HepG2 (cell line): ENCODE measurements at regions of chr3 and their contacts with region 1.

Region 1: GRCh38 chr3:43690400-43691119 is at the start of gene ABHD5:
- DNase-seq: peak; percentile 81
- ATAC-seq: peak; percentile 95
- H3K4me3 ChIP-seq: peak within 1 kb of the TSS; percentile 75 to 87 (median 82)
- H3K27ac ChIP-seq: peak within 1 kb of the TSS; percentile 86
- H3K4me1 ChIP-seq: peaks cover 30% of the 10 kb centered on the region
- H3K27me3 ChIP-seq: no peaks in the 10 kb centered on the region
- CTCF ChIP-seq: peak; percentile 58
- EP300 ChIP-seq: 0 out of 4 replicates have a peak, but pooled peaks of 1 of the 2 experiments have one; percentile 14
- POLR2A ChIP-seq: peak; percentile 97 to 98
- RAD21 ChIP-seq: peak; percentile 81
- total RNA-seq, gene ABHD5: 13.3 and 16.8 TPM in 2 replicates

Region 2: DNA sequence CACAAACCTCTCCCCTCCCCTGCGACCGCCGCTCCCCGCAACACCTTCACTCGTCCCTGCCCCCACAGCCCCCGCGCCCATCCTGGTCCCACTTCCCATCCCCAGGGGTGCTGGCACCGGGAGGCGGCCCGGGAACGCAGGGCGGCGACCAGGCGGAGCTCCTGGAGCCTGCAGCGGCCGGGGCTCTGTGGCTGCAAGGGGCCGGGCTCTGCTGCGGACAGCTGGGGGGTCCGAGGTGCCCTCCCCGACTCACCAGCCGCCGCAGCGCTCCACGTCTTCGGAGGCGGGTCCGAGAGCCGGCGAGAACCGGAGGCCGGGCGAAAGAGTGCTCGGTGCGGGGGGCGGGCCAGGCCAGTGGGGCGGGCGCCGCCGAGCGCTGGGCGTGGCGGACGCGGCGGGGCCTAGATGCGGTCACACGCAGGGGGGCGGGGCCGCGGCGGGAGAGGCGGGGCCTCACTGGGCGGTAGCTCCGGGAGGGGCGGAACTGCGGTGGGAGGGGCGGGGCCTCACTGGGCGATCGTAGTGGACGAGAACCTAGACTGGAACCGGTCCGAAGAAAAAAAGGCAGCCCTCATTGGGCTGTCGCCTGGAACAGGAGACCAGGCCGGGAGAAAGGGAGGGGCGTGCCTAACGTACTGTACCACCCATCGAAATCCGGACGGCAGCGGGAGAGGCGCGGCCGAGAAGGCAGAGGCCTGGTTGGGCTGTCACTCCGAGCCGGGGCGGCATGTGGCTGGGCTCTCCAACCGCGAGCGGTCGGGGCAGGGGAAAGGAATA is 68.7 kb before region 1 on chr3 and contains the start of gene ANO10:
- CTCF ChIA-PET with region 1: no interaction called
- POLR2A ChIA-PET with region 1: no interaction called
- in situ Hi-C with region 1: no loop called
- intact Hi-C with region 1: loop called (anchors 2 kb)
- DNase-seq: peak; percentile 97
- ATAC-seq: peak; percentile 98
- H3K4me3 ChIP-seq: peak within 1 kb of the TSS; percentile 89 to 98 (median 92)
- H3K27ac ChIP-seq: peak within 1 kb of the TSS; percentile 46
- H3K4me1 ChIP-seq: peaks cover 35% of the 10 kb centered on the region
- H3K27me3 ChIP-seq: no peaks in the 10 kb centered on the region; a peak in 1 of 5 replicates
- CTCF ChIP-seq: no peak
- EP300 ChIP-seq: no peak
- POLR2A ChIP-seq: peak; percentile 40 to 78; a peak in 2 of 4 replicates
- RAD21 ChIP-seq: no peak
- total RNA-seq, gene ANO10: 7.6 and 13.1 TPM in 2 replicates

Region 3: DNA sequence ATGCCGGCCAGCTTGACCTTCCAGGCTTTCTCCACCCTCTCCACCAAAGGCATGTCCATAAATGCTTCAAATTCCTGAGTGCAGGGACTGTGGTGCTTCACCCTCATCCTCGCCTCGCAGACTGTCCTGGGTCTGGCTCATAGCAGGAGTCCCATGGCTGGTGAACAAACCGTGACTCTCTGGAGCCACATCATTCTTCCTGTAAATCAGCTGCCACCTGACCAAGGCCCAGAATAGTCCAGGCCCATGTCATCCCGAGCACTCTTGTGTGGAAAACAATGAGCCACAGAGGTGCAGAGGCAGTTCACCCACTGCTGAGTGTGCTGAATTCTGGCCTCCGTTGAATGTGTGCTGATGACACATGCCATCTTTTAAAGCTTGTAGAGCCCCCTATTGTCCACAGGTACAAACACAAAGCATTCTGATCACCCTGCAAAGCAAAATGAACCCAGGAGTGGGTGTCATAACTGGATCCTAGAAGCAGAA is 68.8 kb after region 1 on chr3:
- CTCF ChIA-PET with region 1: interaction called, 3 read pairs
- POLR2A ChIA-PET with region 1: no interaction called
- in situ Hi-C with region 1: no loop called
- intact Hi-C with region 1: loop called (anchors 1 kb)
- DNase-seq: peak; percentile 56
- ATAC-seq: peak; percentile 92
- H3K4me3 ChIP-seq: peak overlapping the region in 1 of 3 experiments; percentile 35; a peak in 1 of 6 replicates
- H3K27ac ChIP-seq: no peak overlapping the region
- H3K4me1 ChIP-seq: peaks cover 19% of the 10 kb centered on the region; the same call in 1 of the 2 replicates
- H3K27me3 ChIP-seq: no peaks in the 10 kb centered on the region
- CTCF ChIP-seq: peak; percentile 72
- EP300 ChIP-seq: no peak
- POLR2A ChIP-seq: no peak
- RAD21 ChIP-seq: 0 out of 2 replicates have a peak, but pooled peaks have one; percentile 8